HEK293 (cell line): ENCODE measurements at regions of chr5 and their contacts with region 1.

Region 1: DNA sequence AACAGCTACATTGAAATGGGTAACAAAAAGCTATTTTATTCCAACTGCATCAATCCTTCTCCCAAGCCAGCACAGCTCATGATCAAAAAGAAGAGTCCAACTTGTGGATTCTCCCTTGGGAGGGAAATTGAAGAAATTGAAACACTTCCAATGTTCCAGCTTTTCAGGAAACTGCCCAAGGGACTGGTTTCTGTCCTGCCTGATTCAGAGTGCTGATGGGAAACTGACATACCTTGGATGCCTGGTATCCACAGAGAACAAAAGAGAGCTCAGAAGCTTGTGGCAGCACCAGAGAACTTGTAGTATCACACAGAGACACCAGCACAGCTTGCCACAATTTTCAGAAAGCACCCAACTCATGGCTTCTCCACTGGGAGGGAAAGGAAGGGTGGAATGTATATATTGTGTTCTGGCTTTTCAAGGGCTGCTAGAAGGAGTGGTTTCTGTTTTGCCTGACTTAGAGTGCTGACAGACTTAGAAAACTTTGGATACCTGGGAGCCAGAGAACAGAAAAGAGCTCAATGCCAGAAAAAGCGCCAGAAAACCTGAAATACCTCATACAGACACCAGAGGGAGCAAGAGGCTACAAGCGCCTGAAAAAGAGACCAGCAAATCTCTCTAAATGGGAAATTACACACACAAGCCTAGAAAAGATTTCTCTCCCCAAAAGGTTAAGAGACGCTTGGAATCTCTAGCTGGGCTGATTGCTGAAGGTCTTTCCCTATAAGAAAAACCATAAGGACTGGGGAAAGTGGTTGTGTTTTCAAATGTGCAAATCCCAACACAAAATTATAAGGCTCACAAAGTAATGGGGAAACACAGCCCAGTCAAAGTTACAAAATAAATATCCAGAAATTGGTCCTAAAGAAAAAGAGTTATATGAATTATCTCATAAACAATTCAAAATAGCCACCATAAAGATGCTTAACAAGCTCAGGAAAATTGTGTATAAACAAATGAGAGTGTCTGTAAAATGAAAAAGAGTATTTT is 178.8 kb downstream of the SPOCK1 start:
- H3K4me3 ChIP-seq: no peak overlapping the region
- H3K27ac ChIP-seq: no peak overlapping the region
- H3K4me1 ChIP-seq: no peaks in the 10 kb centered on the region
- CTCF ChIP-seq: no peak

Region 2: DNA sequence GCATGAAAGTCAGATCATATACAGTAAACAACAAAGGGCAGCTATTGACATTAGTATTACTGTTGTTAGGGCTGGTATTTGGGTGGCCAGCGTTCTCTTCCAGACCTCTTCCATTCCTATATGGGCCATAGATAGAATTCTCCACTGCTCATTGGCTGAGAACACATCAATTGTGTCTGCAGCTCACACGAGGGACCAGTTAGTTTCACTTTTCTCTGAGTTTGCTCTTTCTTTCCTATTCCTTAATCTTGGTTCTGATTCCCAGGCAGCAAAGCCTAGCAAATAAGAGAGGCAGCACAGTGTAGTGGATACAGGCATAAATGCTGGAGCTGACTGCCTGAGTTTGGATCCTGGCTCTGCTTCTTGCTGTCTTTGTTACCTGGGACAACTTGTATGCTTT is 297.6 kb before region 1 on chr5:
- CTCF ChIA-PET with region 1: no interaction called
- POLR2A ChIA-PET with region 1: no interaction called
- H3K4me3 ChIP-seq: no peak overlapping the region
- H3K27ac ChIP-seq: no peak overlapping the region
- H3K4me1 ChIP-seq: 0 out of 2 replicates have a peak, but pooled peaks cover 3% of the 10 kb centered on the region
- CTCF ChIP-seq: no peak

Region 3: DNA sequence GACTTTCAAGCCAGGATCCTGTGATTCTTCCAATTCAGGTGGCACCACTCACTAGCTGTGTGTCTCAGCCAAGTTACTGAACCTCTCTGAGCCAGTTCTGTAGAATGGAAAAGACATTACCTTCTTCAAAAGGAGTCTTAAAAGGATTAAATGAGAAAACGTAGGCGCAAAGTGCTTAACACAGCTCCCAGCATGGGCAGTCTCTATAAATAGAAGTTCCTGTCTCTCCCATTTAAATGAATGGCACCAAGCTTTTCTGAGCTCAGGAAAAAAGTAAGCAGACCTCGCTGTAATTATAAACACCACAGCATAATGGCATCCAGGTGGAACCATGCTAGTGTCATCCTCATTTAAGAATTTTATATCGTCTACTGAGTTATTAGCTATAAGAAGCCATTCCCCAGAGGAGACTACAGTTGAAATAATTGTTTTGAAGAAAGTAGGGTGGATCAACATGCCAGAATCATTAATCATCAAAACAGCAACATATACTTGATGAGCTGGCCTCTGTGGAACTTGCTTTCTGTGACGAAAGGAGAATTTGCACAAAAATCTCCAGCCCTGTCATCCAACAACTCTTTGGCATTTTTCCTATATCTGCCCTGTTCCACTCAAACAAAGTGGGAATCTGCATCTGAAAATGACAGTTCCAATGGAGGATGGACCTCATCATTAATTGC is 10.2 kb before region 1 on chr5:
- CTCF ChIA-PET with region 1: interaction called, 23 read pairs
- POLR2A ChIA-PET with region 1: no interaction called
- H3K4me3 ChIP-seq: no peak overlapping the region
- H3K27ac ChIP-seq: no peak overlapping the region
- H3K4me1 ChIP-seq: no peaks in the 10 kb centered on the region
- CTCF ChIP-seq: no peak

Region 4: GRCh38 chr5:137332296-137332695 is 11.9 kb after region 1 on chr5:
- CTCF ChIA-PET with region 1: interaction called, 18 read pairs
- POLR2A ChIA-PET with region 1: no interaction called
- H3K4me3 ChIP-seq: no peak overlapping the region
- H3K27ac ChIP-seq: no peak overlapping the region
- H3K4me1 ChIP-seq: no peaks in the 10 kb centered on the region
- CTCF ChIP-seq: no peak

Region 5: GRCh38 chr5:137344723-137345322 is 24.5 kb after region 1 on chr5:
- CTCF ChIA-PET with region 1: interaction called, 24 read pairs
- POLR2A ChIA-PET with region 1: no interaction called
- H3K4me3 ChIP-seq: no peak overlapping the region
- H3K27ac ChIP-seq: no peak overlapping the region
- H3K4me1 ChIP-seq: no peaks in the 10 kb centered on the region
- CTCF ChIP-seq: no peak

Region 6: DNA sequence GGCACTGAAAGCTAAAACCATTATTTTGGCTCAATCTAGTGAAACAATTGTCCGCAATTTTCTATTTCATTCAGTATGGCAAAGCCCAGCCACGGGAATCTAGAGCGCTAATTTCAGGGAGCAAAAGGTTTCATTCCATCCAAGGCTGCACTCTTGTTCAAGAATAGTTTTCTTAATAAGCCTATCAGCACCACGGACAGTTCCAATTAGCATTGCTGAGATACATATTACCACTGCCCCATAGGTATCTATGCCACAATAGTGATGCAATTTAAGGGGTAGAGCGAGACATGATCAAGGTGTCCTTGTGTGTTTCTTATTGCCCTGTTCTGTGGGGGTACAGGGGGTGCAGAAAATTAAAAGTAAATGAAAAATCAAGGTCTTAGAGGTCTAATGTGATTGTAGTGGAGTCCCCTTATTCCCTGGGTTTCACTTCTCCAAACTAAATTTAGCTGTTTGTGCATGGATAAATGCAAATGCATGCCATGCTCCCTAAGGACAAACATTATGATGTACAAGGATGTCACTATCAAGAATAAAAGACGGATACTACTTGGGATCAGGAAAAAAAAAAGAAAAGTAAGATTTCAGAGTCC is 133.2 kb after region 1 on chr5:
- CTCF ChIA-PET with region 1: no interaction called
- POLR2A ChIA-PET with region 1: no interaction called
- H3K4me3 ChIP-seq: no peak overlapping the region
- H3K27ac ChIP-seq: no peak overlapping the region
- H3K4me1 ChIP-seq: no peaks in the 10 kb centered on the region
- CTCF ChIP-seq: no peak

Region 7: GRCh38 chr5:137478043-137478442 is 157.7 kb after region 1 on chr5:
- CTCF ChIA-PET with region 1: interaction called, 11 read pairs
- POLR2A ChIA-PET with region 1: no interaction called
- H3K4me3 ChIP-seq: no peak overlapping the region
- H3K27ac ChIP-seq: no peak overlapping the region
- H3K4me1 ChIP-seq: no peaks in the 10 kb centered on the region
- CTCF ChIP-seq: no peak

Region 8: DNA sequence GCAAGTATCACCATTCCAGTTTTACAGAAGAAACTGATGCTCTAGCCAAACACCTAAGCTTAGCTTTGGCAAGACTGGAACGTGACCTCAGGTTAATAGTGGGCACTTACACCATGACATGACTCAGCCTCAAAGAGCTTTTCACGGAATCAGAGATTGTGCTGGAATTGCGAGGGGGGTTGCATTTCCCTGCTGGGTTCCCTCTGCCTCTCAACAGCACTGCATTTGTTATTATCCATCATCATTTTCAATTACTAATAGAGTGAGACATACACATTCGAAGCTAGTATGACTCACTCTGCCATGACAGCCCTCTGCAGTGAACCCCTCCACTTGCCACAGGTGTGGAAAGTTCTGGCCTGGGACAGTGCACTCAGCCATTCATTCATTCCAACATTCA is 170.8 kb after region 1 on chr5:
- CTCF ChIA-PET with region 1: interaction called, 55 read pairs
- POLR2A ChIA-PET with region 1: no interaction called
- H3K4me3 ChIP-seq: no peak overlapping the region
- H3K27ac ChIP-seq: no peak overlapping the region
- H3K4me1 ChIP-seq: no peaks in the 10 kb centered on the region
- CTCF ChIP-seq: no peak

Region 9: DNA sequence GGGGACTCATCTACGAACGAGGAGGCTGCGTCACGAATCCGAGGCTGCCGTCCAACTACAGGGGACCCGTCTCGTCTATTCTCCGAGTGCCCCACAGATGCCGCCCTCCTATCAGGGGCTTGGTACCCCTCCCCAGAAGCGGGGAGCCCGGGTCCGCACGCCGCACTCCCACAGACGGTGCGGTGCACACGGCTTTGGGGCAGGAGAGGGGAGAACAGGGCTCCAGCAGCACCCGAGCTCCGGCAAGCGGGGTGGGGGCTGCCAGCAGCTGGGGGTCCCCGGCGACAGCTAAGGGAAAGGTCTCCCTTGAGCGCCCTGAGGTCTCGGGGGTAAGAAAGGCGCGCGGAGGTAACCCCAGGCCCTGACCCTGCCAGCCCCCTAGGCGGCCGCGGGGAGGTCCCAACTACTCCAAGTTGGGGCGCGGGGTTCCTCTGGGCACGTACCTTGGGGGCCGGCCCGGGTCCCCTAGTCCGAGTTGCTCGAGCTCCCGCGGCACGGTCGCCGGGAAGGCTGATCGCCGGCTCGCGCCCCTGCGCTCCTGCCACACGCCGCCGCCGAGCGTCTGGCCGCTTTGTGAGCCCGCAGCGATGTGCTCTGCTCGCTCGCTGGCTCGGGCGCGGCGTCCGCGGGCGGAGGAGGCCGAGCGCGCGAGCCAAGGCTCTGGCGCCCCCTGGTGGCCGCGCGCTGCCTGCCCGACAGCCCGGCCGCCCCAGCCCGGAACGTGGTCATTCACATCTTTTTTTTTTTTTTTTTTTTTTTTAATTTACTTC is 178.6 kb after region 1 on chr5 and contains the start of gene SPOCK1:
- CTCF ChIA-PET with region 1: interaction called, 55 read pairs
- POLR2A ChIA-PET with region 1: no interaction called
- H3K4me3 ChIP-seq: peak within 1 kb of the TSS; percentile 41
- H3K27ac ChIP-seq: no peak within 1 kb of the TSS; the same call in 1 of the 2 replicates
- H3K4me1 ChIP-seq: no peaks in the 10 kb centered on the region
- CTCF ChIP-seq: no peak

Region 10: GRCh38 chr5:137728048-137728447 is 407.7 kb after region 1 on chr5:
- CTCF ChIA-PET with region 1: no interaction called
- POLR2A ChIA-PET with region 1: no interaction called
- H3K4me3 ChIP-seq: no peak overlapping the region
- H3K27ac ChIP-seq: no peak overlapping the region
- H3K4me1 ChIP-seq: no peaks in the 10 kb centered on the region
- CTCF ChIP-seq: no peak